ENCODE measurements at regions of chr11 and their contacts with region 1.

Region 1: GRCh38 chr11:47213985-47214564 is 699 bp upstream of the DDB2 start:
- DNase-seq: peak; percentile 92
- H3K4me3 Mint-ChIP-seq: peak overlapping the region; percentile 97
- H3K27ac Mint-ChIP-seq: peak overlapping the region; percentile 100
- H3K4me1 Mint-ChIP-seq: peaks cover 40% of the 10 kb centered on the region
- H3K27me3 Mint-ChIP-seq: peaks cover 10% of the 10 kb centered on the region

Region 2: DNA sequence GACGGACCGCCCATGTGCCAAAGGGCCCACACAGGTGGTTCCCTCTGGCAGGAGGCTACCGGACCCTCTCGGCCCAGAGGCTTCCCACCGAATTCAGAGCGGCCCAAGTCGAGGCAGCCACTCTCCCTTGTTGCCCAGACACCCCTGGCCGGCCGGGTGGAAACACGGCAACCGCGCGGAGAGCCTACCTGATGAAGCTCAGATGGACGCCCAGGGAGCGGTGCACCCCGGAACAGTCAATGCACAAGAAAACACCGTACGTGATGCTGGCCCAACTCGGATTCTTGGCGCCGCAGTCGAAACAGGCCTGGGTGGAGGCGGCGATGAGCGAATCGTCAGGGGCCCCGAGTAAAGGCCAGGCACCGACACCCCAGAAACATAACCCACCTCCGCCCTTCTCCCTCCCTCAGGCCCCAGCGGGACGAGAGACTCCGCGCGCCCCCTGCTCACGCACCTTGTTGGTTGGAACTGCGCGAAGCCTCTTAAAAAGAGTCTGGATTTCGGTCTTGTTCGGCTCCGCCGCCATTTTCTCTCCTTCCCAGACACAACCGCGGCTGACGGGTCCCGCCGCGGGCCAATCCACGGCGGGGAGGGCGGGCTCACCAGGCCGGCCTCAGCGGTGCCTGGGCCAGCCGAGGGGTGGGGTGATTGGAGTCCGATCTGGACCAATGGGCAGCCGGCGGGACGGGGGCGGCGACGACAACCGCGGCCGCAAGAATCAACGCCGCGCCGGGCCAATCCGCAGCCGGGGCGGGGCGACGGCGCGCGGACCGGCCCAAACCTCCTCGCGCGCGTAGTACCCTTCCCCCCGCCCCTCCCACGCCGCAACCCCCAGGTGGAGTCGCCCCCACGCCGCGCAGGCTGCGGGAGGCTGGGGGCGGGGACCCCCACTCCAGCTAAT is 37.5 kb before region 1 on chr11 and contains the start of gene ARFGAP2:
- CTCF ChIA-PET with region 1: interaction called, 32 read pairs
- DNase-seq: peak; percentile 97
- H3K4me3 Mint-ChIP-seq: peak within 1 kb of the TSS; percentile 96
- H3K27ac Mint-ChIP-seq: peak within 1 kb of the TSS; percentile 100
- H3K4me1 Mint-ChIP-seq: peaks cover 51% of the 10 kb centered on the region
- H3K27me3 Mint-ChIP-seq: no peaks in the 10 kb centered on the region

Region 3: DNA sequence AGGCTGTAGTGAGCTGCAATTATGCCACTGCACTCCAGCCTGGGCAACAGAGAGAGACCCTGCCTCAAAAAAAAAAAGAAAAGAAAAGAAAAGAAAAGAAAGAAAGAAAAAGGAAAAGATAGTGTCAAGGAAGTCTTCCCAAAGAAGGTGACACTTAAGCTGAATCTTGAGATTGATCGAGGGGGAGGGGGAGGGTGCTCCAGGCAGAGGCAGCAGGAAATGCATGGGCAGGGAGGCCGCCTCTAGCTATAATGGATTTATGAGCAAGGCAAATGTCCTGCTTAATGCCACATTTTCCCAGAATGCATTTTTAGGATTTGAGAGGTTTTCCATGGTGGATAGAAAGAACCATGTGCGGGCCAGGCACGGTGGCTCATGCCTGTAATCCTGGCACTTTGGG is 13.1 kb before region 1 on chr11:
- CTCF ChIA-PET with region 1: no interaction called
- DNase-seq: no peak
- H3K4me3 Mint-ChIP-seq: no peak overlapping the region
- H3K27ac Mint-ChIP-seq: no peak overlapping the region
- H3K4me1 Mint-ChIP-seq: no peaks in the 10 kb centered on the region
- H3K27me3 Mint-ChIP-seq: peaks cover 75% of the 10 kb centered on the region